ENCODE measurements at regions of chr6 and their contacts with region 1.

Region 1: DNA sequence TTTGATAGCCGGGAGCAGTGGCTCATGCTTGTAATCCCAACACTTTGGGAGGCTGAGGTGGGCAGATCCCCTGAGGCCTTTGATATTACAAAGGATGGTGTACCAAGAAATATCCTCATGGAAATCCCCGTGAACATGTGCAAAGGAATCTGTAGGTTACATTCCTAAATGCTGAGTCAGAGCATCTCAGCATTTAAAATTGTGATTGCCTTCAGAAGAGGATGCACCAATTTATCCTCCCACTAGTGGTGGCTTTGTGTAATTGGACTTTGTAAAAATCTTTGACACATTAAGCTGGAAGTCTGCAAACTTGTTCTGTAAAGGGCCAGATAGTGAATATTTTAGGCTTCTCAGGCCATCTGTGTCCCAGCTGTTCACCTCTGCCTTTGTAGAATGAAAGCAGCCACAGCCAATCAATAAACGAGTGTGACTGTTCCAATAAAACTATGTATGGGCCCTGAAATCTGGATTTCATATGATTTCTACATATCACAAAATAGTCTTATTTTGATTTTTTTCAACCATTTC is 11.8 kb downstream of the TMEM14B start:
- DNase-seq: peak; percentile 71 to 95
- H3K4me3 ChIP-seq: no peak overlapping the region; the same call in 1 of the 2 replicates
- H3K27ac ChIP-seq: peak overlapping the region; percentile 82
- H3K4me1 ChIP-seq: peaks cover 21% of the 10 kb centered on the region
- H3K27me3 ChIP-seq: no peaks in the 10 kb centered on the region
- CTCF ChIP-seq: peak; percentile 77

Region 2: DNA sequence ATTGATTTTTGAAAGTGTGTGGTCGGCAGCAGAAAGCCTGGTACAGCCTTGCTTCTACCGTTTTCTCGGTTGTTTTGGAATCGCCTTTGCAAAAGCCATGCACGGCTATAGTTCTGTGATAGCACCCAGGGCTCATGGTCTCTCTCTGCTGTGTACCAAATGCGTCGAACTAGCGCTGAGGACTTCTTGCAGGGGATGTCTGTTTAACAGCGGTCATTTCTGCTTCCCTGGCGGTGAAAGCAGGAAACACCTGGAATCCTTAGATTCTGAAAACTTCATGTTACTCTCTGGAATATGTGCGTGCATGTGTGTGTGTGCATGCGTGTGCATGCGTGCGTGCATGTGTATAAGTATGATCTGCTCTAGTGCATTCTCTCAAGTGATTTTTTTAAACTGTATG is 264.3 kb before region 1 on chr6:
- CTCF ChIA-PET with region 1: no interaction called
- POLR2A ChIA-PET with region 1: no interaction called
- intact Hi-C with region 1: no loop called
- DNase-seq: no peak
- H3K4me3 ChIP-seq: no peak overlapping the region
- H3K27ac ChIP-seq: no peak overlapping the region
- H3K4me1 ChIP-seq: no peaks in the 10 kb centered on the region
- H3K27me3 ChIP-seq: no peaks in the 10 kb centered on the region
- CTCF ChIP-seq: no peak

Region 3: DNA sequence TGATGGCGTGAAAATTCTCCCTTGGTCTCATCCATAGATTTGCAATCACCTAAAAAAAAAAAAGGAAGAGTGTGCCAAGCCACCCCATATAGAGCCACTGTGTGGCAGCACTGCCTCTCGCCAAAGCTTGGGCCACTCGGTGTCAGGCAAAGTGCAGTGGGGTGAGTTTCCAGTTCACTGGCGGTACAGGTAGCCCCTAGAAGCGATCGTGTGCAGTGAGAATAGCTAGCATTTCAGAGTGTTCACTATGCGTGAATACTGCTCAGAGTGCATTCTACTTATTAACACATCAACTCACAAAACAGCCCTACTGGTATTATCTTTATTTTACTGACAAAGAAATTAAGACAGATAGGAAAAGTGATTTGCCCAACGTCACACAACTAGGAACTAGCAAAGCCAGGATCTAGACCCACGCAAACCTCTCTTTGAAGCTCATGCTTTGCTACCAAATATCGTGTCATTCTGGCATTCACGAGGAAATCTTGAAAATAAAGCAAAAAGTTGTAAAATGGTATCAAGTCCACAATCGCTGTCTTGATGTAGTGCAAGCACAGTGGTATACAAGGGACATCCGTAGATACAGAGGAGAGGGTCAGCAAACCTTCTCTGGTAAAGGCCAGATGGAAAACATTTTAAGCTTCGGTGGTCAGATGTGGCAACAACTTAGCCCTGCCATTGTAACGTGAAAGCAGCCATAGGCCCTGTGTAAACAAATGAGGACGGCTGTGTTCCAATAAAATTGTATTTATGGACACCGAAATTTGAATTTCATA is 248.6 kb before region 1 on chr6:
- CTCF ChIA-PET with region 1: no interaction called
- POLR2A ChIA-PET with region 1: no interaction called
- intact Hi-C with region 1: loop called (anchors 2 kb)
- DNase-seq: peak in 1 of 2 experiments; percentile 72
- H3K4me3 ChIP-seq: no peak overlapping the region; the same call in 1 of the 2 replicates
- H3K27ac ChIP-seq: no peak overlapping the region
- H3K4me1 ChIP-seq: peaks cover 10% of the 10 kb centered on the region; the same call in 1 of the 2 replicates
- H3K27me3 ChIP-seq: no peaks in the 10 kb centered on the region
- CTCF ChIP-seq: peak; percentile 72

Region 4: GRCh38 chr6:10595731-10596664 is 163.4 kb before region 1 on chr6:
- CTCF ChIA-PET with region 1: no interaction called
- POLR2A ChIA-PET with region 1: interaction called, 21 read pairs
- intact Hi-C with region 1: no loop called
- DNase-seq: peak; percentile 65 to 71
- H3K4me3 ChIP-seq: no peak overlapping the region
- H3K27ac ChIP-seq: peak overlapping the region; percentile 50; the same call in 1 of the 2 replicates
- H3K4me1 ChIP-seq: peaks cover 9% of the 10 kb centered on the region
- H3K27me3 ChIP-seq: no peaks in the 10 kb centered on the region
- CTCF ChIP-seq: no peak

Region 5: DNA sequence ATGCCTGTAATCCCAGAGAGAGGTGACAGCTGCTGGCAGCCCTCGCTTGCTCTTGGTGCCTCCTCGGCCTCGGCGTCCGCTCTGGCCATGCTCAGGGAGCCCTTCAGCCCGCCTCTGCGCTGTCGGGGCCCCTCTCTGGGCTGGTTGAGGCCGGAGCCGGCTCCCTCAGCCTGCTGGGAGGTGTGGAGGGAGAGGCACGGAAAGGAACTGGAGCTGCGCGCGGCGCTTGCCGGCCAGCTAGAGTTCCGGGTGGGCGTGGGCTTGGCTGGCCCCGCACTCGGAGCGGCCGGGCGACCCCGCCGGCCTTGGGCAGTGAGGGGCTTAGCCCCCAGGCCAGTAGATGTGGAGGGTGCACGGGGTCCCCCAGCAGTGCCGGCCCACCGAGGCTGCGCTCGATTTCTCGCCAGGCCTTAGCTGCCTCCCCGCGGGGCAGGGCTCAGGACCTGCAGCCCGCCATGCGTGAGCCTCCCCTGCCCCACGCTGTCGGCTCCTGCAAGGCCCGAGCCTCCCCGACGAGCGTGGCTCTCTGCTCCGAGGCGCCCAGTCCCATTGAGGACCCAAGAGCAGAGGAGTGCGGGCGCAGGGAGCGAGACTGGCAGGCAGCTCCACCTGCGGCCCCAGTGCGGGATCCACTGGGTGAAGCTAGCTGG is 99.6 kb before region 1 on chr6:
- CTCF ChIA-PET with region 1: no interaction called
- POLR2A ChIA-PET with region 1: no interaction called
- intact Hi-C with region 1: no loop called
- DNase-seq: no peak
- H3K4me3 ChIP-seq: no peak overlapping the region
- H3K27ac ChIP-seq: no peak overlapping the region
- H3K4me1 ChIP-seq: no peaks in the 10 kb centered on the region
- H3K27me3 ChIP-seq: no peaks in the 10 kb centered on the region
- CTCF ChIP-seq: no peak

Region 6: GRCh38 chr6:10687582-10687981 is 71.8 kb before region 1 on chr6:
- CTCF ChIA-PET with region 1: no interaction called
- POLR2A ChIA-PET with region 1: no interaction called
- intact Hi-C with region 1: no loop called
- DNase-seq: no peak
- H3K4me3 ChIP-seq: no peak overlapping the region
- H3K27ac ChIP-seq: no peak overlapping the region
- H3K4me1 ChIP-seq: no peaks in the 10 kb centered on the region
- H3K27me3 ChIP-seq: no peaks in the 10 kb centered on the region
- CTCF ChIP-seq: no peak

Region 7: GRCh38 chr6:10747251-10747972 is 12.0 kb before region 1 on chr6 and contains the start of gene TMEM14B:
- CTCF ChIA-PET with region 1: interaction called, 10 read pairs
- POLR2A ChIA-PET with region 1: interaction called, 4 read pairs
- intact Hi-C with region 1: no loop called
- DNase-seq: peak; percentile 78 to 100
- H3K4me3 ChIP-seq: peak within 1 kb of the TSS; percentile 96
- H3K27ac ChIP-seq: peak within 1 kb of the TSS; percentile 53
- H3K4me1 ChIP-seq: peaks cover 13% of the 10 kb centered on the region; the same call in 1 of the 2 replicates
- H3K27me3 ChIP-seq: no peaks in the 10 kb centered on the region
- CTCF ChIP-seq: no peak
- total RNA-seq, gene TMEM14B: 139 and 168 TPM in 2 replicates

Region 8: GRCh38 chr6:11552442-11552841 is 793.1 kb after region 1 on chr6:
- CTCF ChIA-PET with region 1: no interaction called
- POLR2A ChIA-PET with region 1: no interaction called
- intact Hi-C with region 1: no loop called
- DNase-seq: no peak
- H3K4me3 ChIP-seq: no peak overlapping the region
- H3K27ac ChIP-seq: no peak overlapping the region
- H3K4me1 ChIP-seq: no peaks in the 10 kb centered on the region
- H3K27me3 ChIP-seq: no peaks in the 10 kb centered on the region
- CTCF ChIP-seq: no peak

Measured in PC-9 (cell line).